ENCODE measurements at regions of chr2 and their contacts with region 1.

Region 1: DNA sequence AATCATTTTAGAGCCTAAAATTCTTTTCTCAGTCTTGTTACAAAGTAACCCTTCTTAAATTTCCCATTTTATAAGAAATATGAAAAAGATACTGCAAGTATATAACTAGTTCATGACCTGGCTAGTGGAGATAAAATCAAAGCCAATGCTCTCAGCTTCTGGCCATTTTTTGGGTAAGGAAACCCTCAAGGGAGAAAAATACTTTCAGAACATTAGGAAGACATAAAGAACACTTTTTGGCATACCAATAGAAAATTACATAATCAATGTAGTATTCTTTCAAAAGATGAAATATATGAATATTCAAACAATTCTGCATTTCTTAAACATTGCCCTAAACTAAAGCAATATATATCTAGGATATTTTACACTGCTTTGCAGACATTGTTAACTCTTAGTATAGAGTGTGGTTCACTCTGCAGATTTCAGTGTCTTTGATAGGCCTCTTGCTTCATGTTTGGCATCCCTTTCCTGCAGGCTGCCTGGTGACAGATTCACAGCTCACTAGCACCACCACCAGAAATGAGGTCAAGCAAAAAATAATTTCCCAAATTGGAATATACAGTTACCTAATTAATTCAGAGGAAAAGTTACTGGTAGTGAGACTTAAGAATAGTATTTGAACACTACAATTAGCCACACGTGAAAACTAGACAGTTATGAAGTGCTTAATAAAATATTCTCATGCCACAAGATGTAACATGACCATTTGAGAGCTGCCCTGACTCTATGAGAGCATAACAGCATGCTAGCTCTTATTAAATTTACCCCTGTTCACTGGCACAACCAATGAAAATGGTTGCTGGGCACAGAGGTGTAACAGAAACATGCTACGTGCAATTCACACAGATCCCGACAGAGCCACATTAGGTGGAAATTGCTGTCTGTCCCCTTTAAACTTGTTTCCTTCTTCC is 36.0 kb downstream of the PAIP2B start:
- DNase-seq: peak; percentile 43
- ATAC-seq: peak; percentile 67
- H3K4me3 ChIP-seq: no peak overlapping the region
- H3K27ac ChIP-seq: no peak overlapping the region
- H3K4me1 ChIP-seq: no peaks in the 10 kb centered on the region
- H3K27me3 ChIP-seq: no peaks in the 10 kb centered on the region
- CTCF ChIP-seq: peak; percentile 64

Region 2: DNA sequence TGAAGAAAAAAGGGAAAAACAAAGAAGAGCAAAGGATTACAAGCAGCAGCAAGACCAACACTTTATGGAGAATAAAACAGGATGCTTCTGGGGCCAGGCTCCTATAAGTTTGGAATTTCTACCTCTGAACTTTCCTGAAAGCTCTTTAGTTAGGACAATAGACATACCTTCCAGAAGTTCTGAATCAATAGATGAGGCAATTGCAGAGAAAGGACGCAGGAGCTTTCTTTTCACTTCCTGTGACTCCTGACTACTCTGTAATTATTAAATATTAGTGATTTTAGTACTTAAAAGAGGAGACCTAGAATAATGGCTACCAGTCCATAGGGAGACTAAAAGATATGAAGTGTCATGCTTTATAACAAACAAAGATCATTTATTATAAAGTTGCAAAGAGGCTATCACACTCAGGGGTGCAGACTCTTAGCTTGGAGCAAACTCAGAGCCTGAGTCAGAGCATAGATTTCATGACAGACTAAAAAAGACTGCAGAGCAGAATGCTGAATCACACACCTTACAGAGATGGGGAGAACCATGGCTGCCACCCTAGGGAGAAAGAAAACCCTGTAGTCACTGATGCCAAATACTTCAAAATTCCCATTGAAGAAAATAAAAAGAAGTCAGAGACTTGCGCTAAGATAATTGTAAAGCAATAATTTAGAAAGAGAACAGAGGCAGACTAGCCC is 836.5 kb before region 1 on chr2:
- CTCF ChIA-PET with region 1: no interaction called
- POLR2A ChIA-PET with region 1: no interaction called
- intact Hi-C with region 1: no loop called
- DNase-seq: peak; percentile 60
- ATAC-seq: peak; percentile 75
- H3K4me3 ChIP-seq: no peak overlapping the region
- H3K27ac ChIP-seq: peak overlapping the region; percentile 16
- H3K4me1 ChIP-seq: peaks cover 30% of the 10 kb centered on the region
- H3K27me3 ChIP-seq: no peaks in the 10 kb centered on the region
- CTCF ChIP-seq: no peak

Region 3: GRCh38 chr2:71157124-71157793 is 33.7 kb before region 1 on chr2:
- CTCF ChIA-PET with region 1: no interaction called
- POLR2A ChIA-PET with region 1: no interaction called
- intact Hi-C with region 1: loop called (anchors 2 kb)
- DNase-seq: peak; percentile 67
- ATAC-seq: peak; percentile 74
- H3K4me3 ChIP-seq: peak overlapping the region; percentile 50; the same call in 1 of the 2 replicates
- H3K27ac ChIP-seq: no peak overlapping the region
- H3K4me1 ChIP-seq: peaks cover 12% of the 10 kb centered on the region
- H3K27me3 ChIP-seq: no peaks in the 10 kb centered on the region
- CTCF ChIP-seq: peak; percentile 81

Region 4: DNA sequence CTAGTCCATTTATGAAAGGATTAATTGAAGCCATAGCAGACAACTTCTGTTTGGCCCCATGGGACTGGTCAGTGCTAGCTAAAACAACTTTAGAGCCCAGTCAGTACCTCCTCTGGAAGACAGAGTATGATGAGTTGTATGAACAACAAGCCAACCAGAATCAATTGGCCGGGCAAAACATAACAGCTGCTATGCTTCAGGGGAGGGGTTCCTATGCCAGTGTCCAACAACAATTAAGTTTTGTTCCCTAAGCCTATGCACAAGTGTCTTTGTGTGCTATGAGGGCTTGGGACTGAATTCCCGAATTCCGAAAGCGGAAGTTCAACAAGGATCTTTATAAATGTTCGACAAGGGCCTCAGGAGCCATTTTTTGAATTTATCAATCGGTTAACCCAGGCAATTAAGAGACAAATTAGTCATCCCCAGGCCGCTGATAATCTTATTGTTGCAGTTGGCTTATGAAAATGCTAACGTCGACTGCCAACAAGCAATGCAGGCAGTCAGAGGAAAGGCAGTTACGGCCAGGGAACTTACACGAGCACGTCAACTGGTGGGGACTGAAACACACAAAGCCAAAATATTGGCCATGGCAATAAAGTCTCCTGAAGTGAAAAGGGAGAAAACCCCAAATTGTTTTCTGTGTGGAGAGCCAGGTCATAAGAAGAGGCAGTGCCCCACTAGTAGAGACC is 198.6 kb after region 1 on chr2:
- CTCF ChIA-PET with region 1: no interaction called
- POLR2A ChIA-PET with region 1: no interaction called
- intact Hi-C with region 1: no loop called
- DNase-seq: no peak
- ATAC-seq: no peak
- H3K4me3 ChIP-seq: no peak overlapping the region
- H3K27ac ChIP-seq: no peak overlapping the region
- H3K4me1 ChIP-seq: no peaks in the 10 kb centered on the region
- H3K27me3 ChIP-seq: no peaks in the 10 kb centered on the region
- CTCF ChIP-seq: no peak

Measured in PC-3 (cell line).